Breast epithelium (tissue), 4 donors: ENCODE measurements at regions of chr3 and their contacts with region 1.

Region 1: GRCh38 chr3:19954676-19955075 is 7.8 kb downstream of the RAB5A start:
- DNase-seq: no peak
- H3K4me3 ChIP-seq: no peak overlapping the region
- H3K27ac ChIP-seq: no peak overlapping the region
- H3K4me1 ChIP-seq: peaks cover 0 to 2% of the 10 kb centered on the region in 2 donors
- H3K27me3 ChIP-seq: no peaks in the 10 kb centered on the region
- CTCF ChIP-seq: no peak
- POLR2A ChIP-seq: no peak

Region 2: DNA sequence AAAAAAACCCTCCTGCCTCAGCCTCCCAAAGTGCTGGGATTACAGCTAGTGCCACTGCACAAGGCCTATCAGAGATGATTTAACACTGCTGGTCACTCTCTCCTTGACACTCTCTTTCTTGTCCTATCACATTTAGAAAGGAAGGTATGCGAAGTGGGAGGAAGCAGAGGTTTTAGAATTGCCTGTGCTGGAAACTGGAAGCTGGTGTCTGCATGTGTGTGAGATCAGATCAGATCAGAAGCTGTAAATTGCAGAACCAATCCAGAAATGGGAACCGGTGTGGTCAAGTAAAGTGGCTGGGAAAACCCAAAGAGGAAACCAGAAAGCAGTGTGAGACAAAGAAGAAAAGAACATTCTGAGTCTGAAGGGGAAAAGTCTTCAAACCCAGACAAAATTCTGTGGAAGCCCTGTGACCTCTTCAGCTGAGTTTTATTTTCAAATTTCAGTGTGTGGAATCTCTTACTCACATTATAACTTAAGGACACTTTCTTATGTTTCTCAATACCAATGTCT is 23.4 kb before region 1 on chr3:
- intact Hi-C with region 1: no loop called
- DNase-seq: no peak
- H3K4me3 ChIP-seq: no peak overlapping the region
- H3K27ac ChIP-seq: no peak overlapping the region
- H3K4me1 ChIP-seq: no peaks in the 10 kb centered on the region
- H3K27me3 ChIP-seq: peaks cover 0 to 5% of the 10 kb centered on the region in 2 donors
- CTCF ChIP-seq: no peak
- POLR2A ChIP-seq: no peak

Region 3: GRCh38 chr3:20154931-20155330 is 200.3 kb after region 1 on chr3:
- intact Hi-C with region 1: loop called (anchors 10 kb)
- DNase-seq: no peak
- H3K4me3 ChIP-seq: no peak overlapping the region
- H3K27ac ChIP-seq: no peak overlapping the region
- H3K4me1 ChIP-seq: no peaks in the 10 kb centered on the region
- H3K27me3 ChIP-seq: no peaks in the 10 kb centered on the region
- CTCF ChIP-seq: no peak
- POLR2A ChIP-seq: no peak